A673 (cell line): ENCODE measurements at regions of chr7 and their contacts with region 1.

Region 1: GRCh38 chr7:106166655-106167342 is 54.7 kb upstream of the SYPL1 start:
- DNase-seq: peak; percentile 77
- H3K4me3 ChIP-seq: no peak overlapping the region
- H3K27ac ChIP-seq: no peak overlapping the region
- H3K4me1 ChIP-seq: peaks cover 7% of the 10 kb centered on the region
- H3K27me3 ChIP-seq: no peaks in the 10 kb centered on the region
- CTCF ChIP-seq: peak; percentile 89

Region 2: GRCh38 chr7:106056513-106057203 is 110.1 kb before region 1 on chr7:
- CTCF ChIA-PET with region 1: no interaction called
- POLR2A ChIA-PET with region 1: no interaction called
- intact Hi-C with region 1: loop called (anchors 5 kb)
- DNase-seq: peak; percentile 85
- H3K4me3 ChIP-seq: no peak overlapping the region
- H3K27ac ChIP-seq: no peak overlapping the region
- H3K4me1 ChIP-seq: peaks cover 20% of the 10 kb centered on the region
- H3K27me3 ChIP-seq: no peaks in the 10 kb centered on the region
- CTCF ChIP-seq: peak; percentile 90

Region 3: GRCh38 chr7:106143711-106144337 is 23.0 kb before region 1 on chr7:
- CTCF ChIA-PET with region 1: no interaction called
- POLR2A ChIA-PET with region 1: interaction called, 11 read pairs
- intact Hi-C with region 1: no loop called
- DNase-seq: no peak
- H3K4me3 ChIP-seq: no peak overlapping the region
- H3K27ac ChIP-seq: no peak overlapping the region
- H3K4me1 ChIP-seq: peaks cover 15% of the 10 kb centered on the region
- H3K27me3 ChIP-seq: no peaks in the 10 kb centered on the region
- CTCF ChIP-seq: no peak